H1 (cell line): ENCODE measurements at regions of chr10 and their contacts with region 1.

Region 1: GRCh38 chr10:114110174-114110972 is 63.6 kb downstream of the CCDC186 start:
- DNase-seq: no peak
- H3K4me3 ChIP-seq: no peak overlapping the region
- H3K27ac ChIP-seq: no peak overlapping the region
- H3K4me1 ChIP-seq: no peaks in the 10 kb centered on the region
- H3K27me3 ChIP-seq: no peaks in the 10 kb centered on the region
- CTCF ChIP-seq: peak; percentile 4 to 55 (median 45)
- EP300 ChIP-seq: no peak
- POLR2A ChIP-seq: no peak
- RAD21 ChIP-seq: peak; percentile 68 to 70

Region 2: GRCh38 chr10:113922787-113923570 is 187.4 kb before region 1 on chr10:
- CTCF ChIA-PET with region 1: interaction called, 14 read pairs
- POLR2A ChIA-PET with region 1: no interaction called
- DNase-seq: peak; percentile 17 to 51
- H3K4me3 ChIP-seq: no peak overlapping the region
- H3K27ac ChIP-seq: no peak overlapping the region
- H3K4me1 ChIP-seq: no peaks in the 10 kb centered on the region
- H3K27me3 ChIP-seq: no peaks in the 10 kb centered on the region
- CTCF ChIP-seq: peak; percentile 40 to 58 (median 58)
- EP300 ChIP-seq: no peak
- POLR2A ChIP-seq: no peak
- RAD21 ChIP-seq: peak; percentile 44 to 45

Region 3: GRCh38 chr10:114135476-114135875 is 25.1 kb after region 1 on chr10:
- CTCF ChIA-PET with region 1: no interaction called
- POLR2A ChIA-PET with region 1: no interaction called
- DNase-seq: no peak
- H3K4me3 ChIP-seq: no peak overlapping the region
- H3K27ac ChIP-seq: no peak overlapping the region
- H3K4me1 ChIP-seq: no peaks in the 10 kb centered on the region
- H3K27me3 ChIP-seq: no peaks in the 10 kb centered on the region
- CTCF ChIP-seq: no peak
- EP300 ChIP-seq: no peak
- POLR2A ChIP-seq: no peak
- RAD21 ChIP-seq: no peak